Naive thymus-derived CD4-positive, alpha-beta T cell (primary cell): ENCODE measurements at regions of chr7 and their contacts with region 1.

Region 1: GRCh38 chr7:17298207-17298839 is at the start of gene AHR:
- DNase-seq: peak; percentile 66 to 91 (median 81)
- ATAC-seq: peak; percentile 91
- H3K4me3 ChIP-seq: peak within 1 kb of the TSS; percentile 70
- H3K4me3 Mint-ChIP-seq: peak within 1 kb of the TSS; percentile 86 to 98 (median 90)
- H3K27ac ChIP-seq: peak within 1 kb of the TSS; percentile 89
- H3K27ac Mint-ChIP-seq: peak within 1 kb of the TSS; percentile 87 to 97 (median 91)
- H3K4me1 ChIP-seq: peaks cover 9 to 19% of the 10 kb centered on the region in 2 donors
- H3K4me1 Mint-ChIP-seq: peaks cover 19 to 40% (median 27%) of the 10 kb centered on the region in 7 donors
- H3K27me3 ChIP-seq: no peaks in the 10 kb centered on the region
- H3K27me3 Mint-ChIP-seq: no peaks in the 10 kb centered on the region
- total RNA-seq, gene AHR: 15.7 to 109 (median 28.2) TPM

Region 2: GRCh38 chr7:16918288-16918895 is 379.9 kb before region 1 on chr7:
- CTCF ChIA-PET with region 1: no interaction called
- POLR2A ChIA-PET with region 1: no interaction called
- intact Hi-C with region 1: loop called in 1 of 2 experiments (anchors 2 kb)
- DNase-seq: peak in 3 of 9 donors; percentile 13 to 35 (median 25)
- ATAC-seq: no peak
- H3K4me3 ChIP-seq: no peak overlapping the region
- H3K4me3 Mint-ChIP-seq: no peak overlapping the region
- H3K27ac ChIP-seq: no peak overlapping the region
- H3K27ac Mint-ChIP-seq: no peak overlapping the region
- H3K4me1 ChIP-seq: peaks cover 0 to 4% of the 10 kb centered on the region in 2 donors
- H3K4me1 Mint-ChIP-seq: peaks cover 0 to 17% (median 7%) of the 10 kb centered on the region in 7 donors
- H3K27me3 ChIP-seq: no peaks in the 10 kb centered on the region
- H3K27me3 Mint-ChIP-seq: peaks cover 0 to 7% (median 0%) of the 10 kb centered on the region in 5 donors

Region 3: DNA sequence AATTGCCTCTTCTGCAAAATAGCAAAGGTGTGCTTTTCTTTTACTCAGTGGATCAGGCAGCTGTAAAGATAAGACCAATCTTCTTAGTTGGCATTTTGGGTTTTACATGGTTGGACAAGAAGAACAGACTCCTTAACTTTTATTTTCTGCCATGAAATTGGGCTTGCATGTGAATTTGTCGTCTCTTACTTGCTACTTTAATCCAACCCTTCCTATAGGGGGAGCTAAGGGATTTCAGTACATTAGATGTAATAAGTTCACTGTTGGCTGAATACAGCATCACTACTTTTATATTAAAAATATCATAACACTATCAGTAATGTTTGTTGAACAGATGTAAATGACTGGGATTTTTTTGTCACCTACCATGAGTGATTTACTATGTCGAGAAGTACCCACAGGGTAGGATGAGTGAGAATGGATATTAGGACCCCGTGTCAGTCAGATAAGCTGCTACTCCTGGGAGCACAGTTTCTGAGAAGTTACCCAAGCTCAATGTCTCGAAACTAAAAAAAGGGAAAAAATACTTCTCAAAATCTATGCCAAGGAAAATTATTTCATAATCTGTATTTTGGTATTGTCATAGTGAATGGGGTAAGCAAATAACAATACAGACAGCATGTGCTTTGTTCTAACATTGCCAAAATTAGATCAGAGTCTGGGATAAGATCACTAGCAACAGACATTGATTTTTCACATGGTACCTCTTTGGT is 289.2 kb before region 1 on chr7:
- CTCF ChIA-PET with region 1: interaction called, 3 read pairs
- POLR2A ChIA-PET with region 1: interaction called, 3 read pairs
- intact Hi-C with region 1: loop called (anchors 1 to 2 kb)
- DNase-seq: peak in 2 of 9 donors; percentile 5 to 6
- ATAC-seq: peak; percentile 73
- H3K4me3 ChIP-seq: no peak overlapping the region
- H3K4me3 Mint-ChIP-seq: no peak overlapping the region
- H3K27ac ChIP-seq: no peak overlapping the region
- H3K27ac Mint-ChIP-seq: no peak overlapping the region
- H3K4me1 ChIP-seq: peaks cover 0 to 8% of the 10 kb centered on the region in 2 donors
- H3K4me1 Mint-ChIP-seq: peaks cover 5 to 33% (median 11%) of the 10 kb centered on the region in 7 donors
- H3K27me3 ChIP-seq: no peaks in the 10 kb centered on the region
- H3K27me3 Mint-ChIP-seq: peaks cover 0 to 16% (median 0%) of the 10 kb centered on the region in 5 donors

Region 4: DNA sequence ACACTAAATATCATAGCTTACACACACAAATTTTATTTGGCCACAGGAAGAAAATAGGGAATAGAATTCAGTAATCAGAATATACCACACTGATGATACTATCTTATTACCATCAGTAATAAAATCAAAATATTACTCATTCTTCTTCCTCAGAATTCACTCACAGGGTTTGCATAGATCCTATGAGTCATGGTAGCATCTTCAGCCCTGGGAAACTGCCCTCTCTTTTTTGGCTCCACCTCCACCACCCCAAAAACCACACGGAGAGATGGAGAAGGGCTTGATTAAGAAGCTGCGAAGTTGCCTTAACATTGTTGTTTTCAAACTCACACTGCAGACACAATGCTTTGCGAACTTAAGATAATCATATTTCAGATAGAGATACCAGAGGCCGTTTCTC is 154.0 kb before region 1 on chr7:
- CTCF ChIA-PET with region 1: interaction called, 4 read pairs
- POLR2A ChIA-PET with region 1: interaction called, 11 read pairs
- intact Hi-C with region 1: loop called (anchors 1 kb)
- DNase-seq: peak in 1 of 9 donors; percentile 69
- ATAC-seq: peak; percentile 82
- H3K4me3 ChIP-seq: peak overlapping the region; percentile 6
- H3K4me3 Mint-ChIP-seq: peak overlapping the region in 9 of 10 donors; percentile 26 to 85 (median 49)
- H3K27ac ChIP-seq: no peak overlapping the region
- H3K27ac Mint-ChIP-seq: peak overlapping the region in 8 of 9 donors; percentile 0 to 91 (median 55)
- H3K4me1 ChIP-seq: peaks cover 26 to 35% of the 10 kb centered on the region in 2 donors
- H3K4me1 Mint-ChIP-seq: peaks cover 21 to 57% (median 46%) of the 10 kb centered on the region in 7 donors
- H3K27me3 ChIP-seq: no peaks in the 10 kb centered on the region
- H3K27me3 Mint-ChIP-seq: no peaks in the 10 kb centered on the region

Region 5: DNA sequence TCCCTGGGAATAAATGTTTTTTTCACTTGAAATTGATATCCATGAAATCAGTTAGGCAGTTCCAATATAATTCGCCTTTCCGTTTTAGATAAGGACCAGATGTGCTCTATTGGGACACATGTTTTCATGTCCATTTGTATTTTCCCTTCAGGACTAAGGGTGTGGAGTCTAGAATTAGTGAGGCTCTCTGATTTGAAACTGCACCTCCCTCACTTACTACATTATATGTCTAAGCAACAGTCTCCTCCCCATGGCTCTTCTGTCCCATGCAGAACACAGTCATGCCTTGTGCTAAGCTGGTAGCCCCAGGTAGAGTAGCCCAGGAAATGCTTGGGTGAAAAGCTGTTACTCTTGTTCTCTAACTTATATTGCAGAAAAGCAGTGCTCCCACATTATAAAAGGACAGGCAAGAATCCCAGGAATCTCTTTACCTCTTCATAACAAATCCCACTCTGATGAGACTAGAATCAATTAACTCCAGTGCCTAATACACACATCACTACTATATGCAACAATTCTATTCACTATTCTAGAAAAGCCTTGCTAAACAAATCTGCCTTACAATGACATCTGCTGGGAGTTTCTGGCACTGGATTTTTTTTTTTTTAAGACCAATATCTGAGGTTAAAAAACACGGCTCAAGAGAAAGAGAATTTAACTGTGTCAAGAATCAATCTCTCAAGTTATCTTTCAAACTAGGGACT is 348.1 kb after region 1 on chr7:
- CTCF ChIA-PET with region 1: no interaction called
- POLR2A ChIA-PET with region 1: no interaction called
- intact Hi-C with region 1: loop called (anchors 1 to 5 kb)
- DNase-seq: no peak
- ATAC-seq: no peak
- H3K4me3 ChIP-seq: no peak overlapping the region
- H3K4me3 Mint-ChIP-seq: no peak overlapping the region
- H3K27ac ChIP-seq: no peak overlapping the region
- H3K27ac Mint-ChIP-seq: no peak overlapping the region
- H3K4me1 ChIP-seq: no peaks in the 10 kb centered on the region
- H3K4me1 Mint-ChIP-seq: no peaks in the 10 kb centered on the region
- H3K27me3 ChIP-seq: no peaks in the 10 kb centered on the region
- H3K27me3 Mint-ChIP-seq: peaks cover 4 to 29% (median 22%) of the 10 kb centered on the region in 5 donors